Activated naive CD4-positive, alpha-beta T cell treated with anti-CD3 and anti-CD28 coated beads for 36 hours (primary cell): ENCODE measurements at regions of chr15 and their contacts with region 1.

Region 1: GRCh38 chr15:90931737-90932659 is at the start of gene HDDC3:
- DNase-seq: peak; percentile 95
- H3K4me3 Mint-ChIP-seq: peak within 1 kb of the TSS; percentile 99
- H3K27ac Mint-ChIP-seq: peak within 1 kb of the TSS; percentile 100
- H3K4me1 Mint-ChIP-seq: peaks cover 41% of the 10 kb centered on the region
- H3K27me3 Mint-ChIP-seq: no peaks in the 10 kb centered on the region
- total RNA-seq, gene HDDC3: 49.8 to 51.3 TPM

Region 2: DNA sequence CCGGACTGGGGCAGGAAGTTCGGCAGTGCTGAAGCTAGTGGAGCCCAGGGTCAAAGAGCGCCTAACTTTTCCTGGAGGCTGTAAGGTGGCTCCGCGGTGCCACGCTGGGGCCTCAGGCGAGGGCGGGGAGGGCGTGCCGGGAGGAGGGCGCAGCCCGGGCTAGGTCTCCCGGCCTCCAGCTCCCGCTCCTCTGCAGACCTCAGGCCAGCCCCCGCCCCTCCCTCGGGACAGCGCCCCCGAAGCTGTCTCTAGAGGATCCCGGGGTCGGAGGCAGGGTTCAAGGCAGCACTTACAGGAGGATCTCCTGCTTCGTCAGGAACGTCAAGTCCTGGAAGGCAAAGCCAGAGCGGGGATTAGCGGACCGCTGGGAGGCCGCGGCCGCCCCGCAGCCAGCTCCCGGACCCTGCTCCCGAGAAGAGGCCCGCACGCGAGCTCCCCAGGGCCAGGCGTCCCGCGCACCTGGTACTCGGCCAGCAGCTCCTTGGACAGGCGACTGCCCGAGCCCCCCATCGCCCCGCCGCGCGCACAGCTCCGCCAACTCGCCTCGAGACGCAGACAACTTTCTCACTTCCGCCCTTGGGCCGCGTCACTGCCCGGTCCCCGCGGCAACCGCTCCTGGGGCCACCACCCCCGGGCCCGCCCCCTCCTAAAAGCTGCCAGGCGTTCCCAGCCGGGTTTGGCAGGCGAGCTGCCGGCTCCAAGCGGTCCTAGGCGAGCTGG is 698.5 kb before region 1 on chr15 and contains the start of gene CIB1:
- CTCF ChIA-PET with region 1: interaction called, 3 read pairs
- intact Hi-C with region 1: loop called (anchors 1 kb)
- DNase-seq: peak; percentile 98
- H3K4me3 Mint-ChIP-seq: peak within 1 kb of the TSS; percentile 89
- H3K27ac Mint-ChIP-seq: peak within 1 kb of the TSS; percentile 90
- H3K4me1 Mint-ChIP-seq: peaks cover 49% of the 10 kb centered on the region
- H3K27me3 Mint-ChIP-seq: no peaks in the 10 kb centered on the region
- total RNA-seq, gene CIB1: 156 to 171 TPM

Region 3: GRCh38 chr15:90648137-90649070 is 283.6 kb before region 1 on chr15:
- CTCF ChIA-PET with region 1: interaction called, 11 read pairs
- intact Hi-C with region 1: loop called (anchors 1 kb)
- DNase-seq: peak; percentile 82
- H3K4me3 Mint-ChIP-seq: peak overlapping the region; percentile 58
- H3K27ac Mint-ChIP-seq: peak overlapping the region; percentile 91
- H3K4me1 Mint-ChIP-seq: peaks cover 30% of the 10 kb centered on the region
- H3K27me3 Mint-ChIP-seq: peaks cover 4% of the 10 kb centered on the region

Region 4: GRCh38 chr15:90829942-90830440 is 102.0 kb before region 1 on chr15:
- CTCF ChIA-PET with region 1: interaction called, 3 read pairs
- intact Hi-C with region 1: loop called (anchors 2 kb)
- DNase-seq: peak; percentile 94
- H3K4me3 Mint-ChIP-seq: peak overlapping the region; percentile 62
- H3K27ac Mint-ChIP-seq: peak overlapping the region; percentile 100
- H3K4me1 Mint-ChIP-seq: peaks cover 54% of the 10 kb centered on the region
- H3K27me3 Mint-ChIP-seq: no peaks in the 10 kb centered on the region

Region 5: DNA sequence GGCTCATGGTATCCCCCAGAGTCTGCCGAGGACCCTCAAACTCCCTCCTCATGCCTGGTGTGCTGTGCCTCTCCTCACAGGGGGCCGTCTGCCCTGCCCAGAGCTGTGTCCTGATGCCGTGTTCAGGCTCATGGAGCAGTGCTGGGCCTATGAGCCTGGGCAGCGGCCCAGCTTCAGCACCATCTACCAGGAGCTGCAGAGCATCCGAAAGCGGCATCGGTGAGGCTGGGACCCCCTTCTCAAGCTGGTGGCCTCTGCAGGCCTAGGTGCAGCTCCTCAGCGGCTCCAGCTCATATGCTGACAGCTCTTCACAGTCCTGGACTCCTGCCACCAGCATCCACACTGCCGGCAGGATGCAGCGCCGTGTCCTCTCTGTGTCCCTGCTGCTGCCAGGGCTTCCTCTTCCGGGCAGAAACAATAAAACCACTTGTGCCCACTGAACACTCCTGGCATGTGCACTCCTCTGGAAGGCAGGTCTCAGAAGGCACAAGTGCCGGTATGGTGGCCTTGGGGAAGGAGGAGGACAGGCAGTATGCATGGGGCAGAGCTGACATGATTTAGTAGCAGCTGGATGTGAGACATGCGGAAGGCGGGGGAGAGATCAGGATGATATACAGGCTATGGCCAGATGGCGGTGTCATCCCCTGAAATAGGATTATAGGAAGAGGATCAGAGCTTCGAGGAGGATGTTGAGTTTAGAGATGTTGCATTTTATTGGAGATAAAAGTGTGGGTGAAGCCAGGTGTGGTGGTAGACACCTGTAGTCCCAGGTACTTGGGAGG is 36.5 kb before region 1 on chr15:
- CTCF ChIA-PET with region 1: interaction called, 169 read pairs
- intact Hi-C with region 1: no loop called
- DNase-seq: no peak
- H3K4me3 Mint-ChIP-seq: no peak overlapping the region
- H3K27ac Mint-ChIP-seq: no peak overlapping the region
- H3K4me1 Mint-ChIP-seq: no peaks in the 10 kb centered on the region
- H3K27me3 Mint-ChIP-seq: no peaks in the 10 kb centered on the region

Region 6: DNA sequence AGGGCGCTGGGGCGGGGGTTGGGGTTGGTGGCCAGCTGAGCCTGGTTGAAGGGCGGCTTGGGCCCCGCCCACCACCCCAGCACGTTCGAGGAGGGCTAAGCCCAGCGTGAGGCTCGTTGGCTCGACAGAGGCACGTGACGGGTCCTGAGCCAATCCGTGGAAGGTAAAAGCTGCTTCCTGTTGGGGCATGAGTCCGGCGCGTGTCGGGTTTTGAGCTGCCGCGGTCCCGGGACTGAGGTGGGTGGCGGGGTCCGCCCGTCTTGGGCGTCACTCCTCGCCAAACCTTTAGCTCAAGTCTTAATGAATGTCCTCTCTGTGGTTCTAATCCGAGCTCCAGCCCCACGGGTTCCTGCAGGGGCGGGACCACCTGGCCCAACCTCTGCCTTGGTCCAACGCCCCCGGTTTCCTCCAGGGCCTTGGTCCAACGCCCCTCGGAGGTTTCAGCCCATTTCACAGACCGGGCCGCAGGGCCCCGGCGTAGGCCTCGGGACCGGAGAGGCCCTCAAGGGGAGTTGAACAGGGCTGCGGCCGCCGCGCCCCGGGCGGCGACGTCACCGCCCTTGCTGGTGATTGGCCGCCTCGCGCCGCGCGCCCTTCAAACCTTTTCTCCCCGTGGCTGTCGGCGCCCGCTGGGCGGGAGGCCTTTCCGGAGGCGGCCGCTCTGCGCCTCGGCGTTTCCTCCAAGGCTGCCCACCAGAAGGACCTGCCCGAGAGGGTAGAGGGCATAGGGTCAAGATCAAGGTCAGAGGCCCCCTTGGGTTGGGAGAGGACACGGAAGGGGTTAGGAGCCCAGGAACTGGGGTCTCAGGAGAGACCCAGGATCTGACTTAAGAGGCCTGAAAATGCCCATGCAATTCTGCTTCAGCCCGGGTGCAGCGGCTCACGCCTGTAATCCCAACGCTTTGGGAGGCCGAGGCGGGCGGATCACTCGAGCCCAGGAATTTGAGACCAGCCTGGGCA is 23.0 kb after region 1 on chr15 and contains the start of gene RCCD1:
- CTCF ChIA-PET with region 1: interaction called, 104 read pairs
- intact Hi-C with region 1: loop called (anchors 1 kb)
- DNase-seq: peak; percentile 95
- H3K4me3 Mint-ChIP-seq: peak within 1 kb of the TSS; percentile 86
- H3K27ac Mint-ChIP-seq: peak within 1 kb of the TSS; percentile 93
- H3K4me1 Mint-ChIP-seq: peaks cover 12% of the 10 kb centered on the region
- H3K27me3 Mint-ChIP-seq: no peaks in the 10 kb centered on the region
- total RNA-seq, gene RCCD1: 52.0 to 52.4 TPM

Region 7: DNA sequence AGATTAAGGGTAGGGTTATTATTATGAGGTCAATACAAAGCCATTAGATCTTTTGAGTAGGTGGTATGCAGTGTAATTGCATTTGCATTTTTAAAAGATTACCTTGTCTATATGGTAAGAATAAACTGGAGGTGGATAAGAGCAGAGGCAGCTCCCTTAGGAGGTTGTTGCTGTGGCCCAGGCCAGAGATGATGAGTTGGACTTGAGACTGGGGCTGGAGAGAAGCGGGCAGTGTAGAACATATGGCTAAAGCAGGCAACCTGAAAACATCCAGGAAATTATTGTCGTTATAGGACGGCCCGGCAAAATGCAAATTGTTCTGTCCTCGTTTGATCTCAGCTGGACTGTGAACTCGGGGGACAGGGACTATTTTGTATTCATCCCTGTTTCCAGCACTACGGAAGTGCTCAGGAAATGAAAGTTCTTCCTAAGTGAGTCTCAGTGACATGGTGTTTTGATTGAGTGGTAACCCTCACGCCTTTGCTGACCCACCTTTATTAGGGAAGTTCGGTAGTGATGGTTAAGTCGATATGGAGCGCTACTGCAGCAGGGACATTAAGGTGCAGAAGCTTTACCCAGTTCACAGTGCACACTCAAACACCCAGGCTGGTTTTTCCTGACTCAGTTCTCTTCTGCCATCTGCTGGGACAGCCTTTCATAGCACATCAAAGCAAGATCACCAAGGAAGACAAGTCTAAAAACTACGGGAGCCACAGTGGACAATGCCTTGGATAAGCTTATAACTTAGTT is 117.6 kb after region 1 on chr15:
- CTCF ChIA-PET with region 1: interaction called, 9 read pairs
- intact Hi-C with region 1: loop called (anchors 1 kb)
- DNase-seq: peak; percentile 83
- H3K4me3 Mint-ChIP-seq: no peak overlapping the region
- H3K27ac Mint-ChIP-seq: no peak overlapping the region
- H3K4me1 Mint-ChIP-seq: peaks cover 19% of the 10 kb centered on the region
- H3K27me3 Mint-ChIP-seq: no peaks in the 10 kb centered on the region

Region 8: DNA sequence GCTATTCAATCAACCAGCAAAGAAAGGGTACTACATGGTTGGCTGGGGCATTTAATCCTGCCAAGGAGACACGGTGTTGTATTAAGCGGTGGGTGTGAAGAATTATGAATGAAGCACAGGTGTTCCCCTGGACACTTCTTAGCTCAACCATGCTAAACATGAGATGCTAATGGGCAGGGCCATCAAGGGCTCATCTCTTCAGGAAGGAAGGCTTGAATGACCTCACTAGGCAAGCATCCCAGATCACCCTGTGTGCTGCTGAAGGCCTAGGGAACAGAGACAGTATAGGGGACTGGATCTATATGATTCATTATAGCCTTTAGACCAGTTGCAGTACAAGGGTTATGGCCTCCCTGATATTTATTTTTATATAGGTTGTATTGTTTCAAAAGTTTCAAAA is 700.2 kb after region 1 on chr15:
- CTCF ChIA-PET with region 1: no interaction called
- intact Hi-C with region 1: no loop called
- DNase-seq: no peak
- H3K4me3 Mint-ChIP-seq: no peak overlapping the region
- H3K27ac Mint-ChIP-seq: no peak overlapping the region
- H3K4me1 Mint-ChIP-seq: no peaks in the 10 kb centered on the region
- H3K27me3 Mint-ChIP-seq: no peaks in the 10 kb centered on the region